ENCODE measurements at regions of chr11 and their contacts with region 1.

Region 1: GRCh38 chr11:114208377-114208776 is 87.8 kb upstream of the NNMT start:
- DNase-seq: no peak
- H3K4me3 ChIP-seq: no peak overlapping the region
- H3K27ac ChIP-seq: no peak overlapping the region
- H3K4me1 ChIP-seq: peaks cover 7% of the 10 kb centered on the region
- H3K27me3 ChIP-seq: no peaks in the 10 kb centered on the region
- CTCF ChIP-seq: no peak
- EP300 ChIP-seq: no peak
- POLR2A ChIP-seq: no peak

Region 2: DNA sequence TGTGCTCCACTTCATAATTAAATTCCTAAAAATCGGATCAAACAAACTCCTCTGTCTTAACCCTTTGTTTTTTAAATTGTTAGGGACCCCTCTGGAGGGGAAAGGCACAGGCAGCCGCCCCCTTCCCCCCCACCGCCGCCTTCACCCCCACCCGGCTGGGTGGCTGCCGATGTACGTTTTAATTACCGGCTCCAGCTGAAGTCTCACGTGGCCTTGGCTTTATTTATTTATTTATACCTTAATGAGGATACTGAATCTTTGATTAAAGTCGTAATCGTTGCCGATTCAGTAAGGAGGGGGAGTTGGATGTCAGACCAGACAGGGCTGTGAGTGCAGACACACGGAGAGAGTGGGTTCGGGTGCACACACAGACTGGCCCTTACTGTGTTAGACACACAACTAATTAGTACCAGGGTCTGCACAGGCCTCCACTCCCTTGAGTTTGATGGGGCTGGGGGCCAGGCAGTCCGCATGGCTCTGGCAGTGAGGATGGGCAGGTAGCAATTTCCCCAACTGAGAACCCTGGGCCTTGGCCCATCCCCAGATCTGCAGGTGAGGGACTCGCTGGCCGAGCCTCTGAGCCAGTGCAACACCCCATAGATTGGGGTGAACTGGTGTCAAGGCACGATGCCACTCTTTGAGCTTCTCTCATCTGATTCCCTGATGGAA is 36.5 kb after region 1 on chr11:
- intact Hi-C with region 1: loop called in 1 of 4 experiments (anchors 5 kb)
- DNase-seq: no peak
- H3K4me3 ChIP-seq: no peak overlapping the region
- H3K27ac ChIP-seq: no peak overlapping the region
- H3K4me1 ChIP-seq: no peaks in the 10 kb centered on the region
- H3K27me3 ChIP-seq: no peaks in the 10 kb centered on the region
- CTCF ChIP-seq: no peak
- EP300 ChIP-seq: no peak
- POLR2A ChIP-seq: no peak

Region 3: DNA sequence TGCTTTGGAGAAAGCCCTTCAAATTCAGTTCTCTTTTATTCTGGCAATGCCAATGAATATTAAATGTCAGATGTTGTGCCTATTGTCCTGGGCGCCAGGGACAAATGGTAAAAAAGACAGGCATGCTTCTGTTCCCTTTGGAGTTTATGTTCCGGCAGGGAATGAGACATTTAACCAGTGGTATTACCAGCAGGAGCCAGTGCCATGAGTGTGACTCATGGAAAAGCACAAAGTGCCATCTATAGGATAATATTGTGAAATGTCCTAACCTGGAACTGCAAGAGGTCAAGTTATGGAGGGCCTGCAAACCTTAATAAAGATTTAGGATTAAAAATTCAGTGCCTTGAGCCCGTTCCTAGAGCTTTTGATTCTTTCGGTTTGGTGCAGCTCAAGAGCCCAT is 270.4 kb after region 1 on chr11:
- intact Hi-C with region 1: no loop called
- DNase-seq: no peak
- H3K4me3 ChIP-seq: no peak overlapping the region
- H3K27ac ChIP-seq: no peak overlapping the region
- H3K4me1 ChIP-seq: no peaks in the 10 kb centered on the region
- H3K27me3 ChIP-seq: no peaks in the 10 kb centered on the region
- CTCF ChIP-seq: no peak
- EP300 ChIP-seq: no peak
- POLR2A ChIP-seq: no peak

Measured in ovary (tissue), 10 donors.